ENCODE measurements at regions of chr11 and their contacts with region 1.

Region 1: GRCh38 chr11:62081378-62082291 is 42.2 kb upstream of the INCENP start:
- DNase-seq: peak; percentile 16
- H3K4me3 ChIP-seq: peak overlapping the region; percentile 27; the same call in 1 of the 2 replicates
- H3K27ac ChIP-seq: no peak overlapping the region
- H3K27me3 ChIP-seq: no peaks in the 10 kb centered on the region
- CTCF ChIP-seq: peak; percentile 88

Region 2: DNA sequence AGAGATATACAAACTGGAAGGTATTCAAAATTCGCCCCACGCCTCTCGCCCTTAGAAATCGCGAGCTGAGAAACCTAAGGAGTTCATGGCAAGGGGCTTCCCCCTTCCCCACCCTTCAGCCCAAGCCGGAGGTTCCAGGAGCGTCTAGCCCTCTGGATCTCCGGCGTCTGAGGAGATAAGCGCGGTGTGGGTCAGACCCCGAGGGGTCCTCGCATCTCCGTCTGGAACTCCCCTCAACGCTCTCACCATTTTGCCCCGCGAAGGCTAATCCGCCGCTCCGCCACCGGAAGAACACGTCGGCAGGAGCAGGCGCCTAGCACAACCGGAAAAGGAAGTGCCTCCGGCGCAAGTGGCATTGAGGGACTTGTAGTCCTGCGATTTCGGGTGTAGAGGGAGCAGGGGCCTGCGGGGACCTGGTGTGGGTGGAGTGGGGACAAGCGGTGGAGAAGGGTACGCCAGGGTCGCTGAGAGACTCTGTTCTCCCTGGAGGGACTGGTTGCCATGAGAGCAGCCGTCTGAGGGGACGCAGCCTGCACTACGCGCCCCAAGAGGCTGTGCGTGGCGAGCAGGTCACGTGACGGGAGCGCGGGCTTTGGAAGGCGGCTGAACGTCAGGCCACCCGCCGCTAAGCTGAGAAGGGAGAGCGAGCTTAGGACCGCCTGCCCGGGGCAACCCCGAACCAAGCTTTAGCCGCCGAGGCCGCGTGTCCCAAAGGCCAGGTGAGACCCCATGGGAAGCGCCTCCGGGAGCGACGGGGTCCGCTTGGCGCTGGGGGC is 289.1 kb before region 1 on chr11 and contains the starts of genes FEN1 and TMEM258:
- CTCF ChIA-PET with region 1: interaction called, 39 read pairs
- POLR2A ChIA-PET with region 1: interaction called, 3 read pairs
- DNase-seq: peak; percentile 88
- H3K4me3 ChIP-seq: peak within 1 kb of the TSS; percentile 96
- H3K27ac ChIP-seq: peak within 1 kb of the TSS; percentile 100
- H3K27me3 ChIP-seq: no peaks in the 10 kb centered on the region
- CTCF ChIP-seq: no peak
- polyA plus RNA-seq, gene FEN1: 7.1 and 8.4 TPM in 2 replicates
- polyA plus RNA-seq, gene TMEM258: 300 and 356 TPM in 2 replicates

Region 3: GRCh38 chr11:61891331-61892084 is 190.1 kb before region 1 on chr11 and contains the start of gene FADS3:
- CTCF ChIA-PET with region 1: interaction called, 175 read pairs
- POLR2A ChIA-PET with region 1: interaction called, 9 read pairs
- DNase-seq: no peak
- H3K4me3 ChIP-seq: peak within 1 kb of the TSS; percentile 84
- H3K27ac ChIP-seq: no peak within 1 kb of the TSS
- H3K27me3 ChIP-seq: no peaks in the 10 kb centered on the region
- CTCF ChIP-seq: no peak
- polyA plus RNA-seq, gene FADS3: 38.9 and 52.9 TPM in 2 replicates

Region 4: GRCh38 chr11:61923166-61924063 is 158.2 kb before region 1 on chr11:
- CTCF ChIA-PET with region 1: interaction called, 24 read pairs
- POLR2A ChIA-PET with region 1: no interaction called
- DNase-seq: peak; percentile 34
- H3K4me3 ChIP-seq: no peak overlapping the region
- H3K27ac ChIP-seq: peak overlapping the region; percentile 73
- H3K27me3 ChIP-seq: peaks cover 16% of the 10 kb centered on the region
- CTCF ChIP-seq: no peak

Region 5: DNA sequence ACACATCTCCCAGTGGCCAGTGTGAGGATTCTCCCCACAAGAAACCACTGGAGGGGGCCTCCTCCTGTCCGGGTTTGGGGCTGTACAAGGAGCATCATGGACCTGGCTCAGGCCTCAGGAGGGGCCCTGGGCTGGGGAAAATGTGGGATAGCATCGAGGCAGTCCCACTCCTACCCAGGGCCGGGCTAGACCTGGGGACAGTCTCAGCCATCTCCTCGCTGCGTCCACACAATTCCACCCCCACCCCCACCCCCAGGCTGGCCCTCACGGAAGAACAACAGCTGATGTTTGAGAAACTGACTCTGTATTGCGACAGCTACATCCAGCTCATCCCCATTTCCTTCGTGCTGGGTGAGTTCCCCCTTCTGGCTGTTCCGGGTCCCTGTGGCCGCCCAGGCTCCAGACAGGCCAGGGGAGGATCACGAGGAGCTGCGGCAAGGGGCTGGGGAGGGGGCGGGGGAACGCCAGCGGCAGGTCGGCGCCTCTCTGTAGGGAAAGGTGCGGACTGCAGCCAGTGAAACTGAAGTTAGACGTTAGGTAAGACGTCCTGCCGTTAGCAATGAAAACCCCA is 126.7 kb before region 1 on chr11:
- CTCF ChIA-PET with region 1: interaction called, 177 read pairs
- POLR2A ChIA-PET with region 1: interaction called, 5 read pairs
- DNase-seq: no peak
- H3K4me3 ChIP-seq: peak overlapping the region; percentile 52
- H3K27ac ChIP-seq: peak overlapping the region; percentile 77
- H3K27me3 ChIP-seq: no peaks in the 10 kb centered on the region
- CTCF ChIP-seq: peak; percentile 31

Region 6: GRCh38 chr11:62069986-62070919 is 11.4 kb before region 1 on chr11:
- CTCF ChIA-PET with region 1: interaction called, 40 read pairs
- POLR2A ChIA-PET with region 1: no interaction called
- DNase-seq: no peak
- H3K4me3 ChIP-seq: no peak overlapping the region
- H3K27ac ChIP-seq: no peak overlapping the region
- H3K27me3 ChIP-seq: peaks cover 4% of the 10 kb centered on the region
- CTCF ChIP-seq: no peak